Posterior vena cava (tissue), 2 donors: ENCODE measurements at regions of chr12 and their contacts with region 1.

Region 1: DNA sequence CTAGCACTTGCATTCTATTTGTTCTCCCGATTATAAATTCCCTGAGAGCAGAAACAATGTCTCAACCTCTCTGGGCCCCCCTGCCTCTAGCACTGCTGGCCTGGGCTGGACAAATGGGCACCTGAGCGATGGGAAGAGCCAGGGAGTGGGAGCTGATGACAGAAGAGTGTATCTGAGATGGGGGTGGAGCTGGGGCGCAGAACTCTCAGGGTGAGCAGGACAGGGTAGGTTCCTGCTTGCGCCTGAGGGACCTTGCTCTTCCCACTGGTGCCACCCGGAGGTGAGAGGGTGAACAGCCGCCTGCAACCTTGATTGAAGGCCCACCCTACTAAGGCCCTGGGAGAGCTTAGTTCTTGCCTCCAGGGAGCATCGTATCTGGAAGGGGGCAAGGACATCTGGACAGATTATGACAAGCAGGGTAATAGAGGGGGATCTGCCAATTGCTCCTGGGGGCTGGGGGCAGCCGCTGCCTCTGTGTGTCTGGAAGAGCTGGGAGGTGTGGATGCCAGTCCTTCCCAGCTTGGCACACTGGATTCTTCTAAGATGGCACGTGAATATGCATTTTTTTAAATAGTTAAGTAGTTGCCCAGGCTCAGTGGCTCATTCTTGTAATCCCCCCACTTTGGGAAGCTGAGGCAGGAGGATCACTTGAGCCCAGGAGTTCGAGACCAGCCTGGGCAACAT is 43.0 kb upstream of the TSPAN9 start:
- DNase-seq: no peak

Region 2: DNA sequence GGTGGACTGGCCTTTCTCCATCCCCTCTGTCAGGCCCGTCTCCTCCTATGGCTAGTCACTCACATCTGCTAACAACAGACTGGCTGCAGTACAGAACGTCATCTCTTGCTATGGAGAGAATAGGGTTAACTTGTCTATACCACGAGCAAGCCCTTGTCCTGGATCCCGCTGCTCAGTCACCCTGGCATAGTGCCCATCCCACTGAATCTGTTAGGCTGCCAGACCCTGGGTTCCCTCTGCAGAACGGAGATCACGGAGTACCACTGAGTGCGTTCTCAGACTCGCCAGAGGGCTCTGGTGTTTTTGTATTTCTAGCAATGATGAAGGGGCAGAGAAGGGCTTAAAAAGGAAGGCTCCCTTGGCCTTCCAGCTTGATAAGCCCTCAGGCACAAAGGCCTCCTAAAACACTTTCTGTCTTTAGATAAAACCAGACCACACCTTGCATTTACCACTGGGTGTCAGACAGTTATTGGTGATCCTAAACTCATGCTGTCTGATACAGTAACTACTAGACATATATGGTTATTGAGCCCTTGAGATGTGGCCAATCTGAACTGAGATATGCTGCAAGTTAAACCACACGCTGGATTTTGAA is 193.1 kb before region 1 on chr12:
- intact Hi-C with region 1: no loop called
- DNase-seq: no peak

Region 3: DNA sequence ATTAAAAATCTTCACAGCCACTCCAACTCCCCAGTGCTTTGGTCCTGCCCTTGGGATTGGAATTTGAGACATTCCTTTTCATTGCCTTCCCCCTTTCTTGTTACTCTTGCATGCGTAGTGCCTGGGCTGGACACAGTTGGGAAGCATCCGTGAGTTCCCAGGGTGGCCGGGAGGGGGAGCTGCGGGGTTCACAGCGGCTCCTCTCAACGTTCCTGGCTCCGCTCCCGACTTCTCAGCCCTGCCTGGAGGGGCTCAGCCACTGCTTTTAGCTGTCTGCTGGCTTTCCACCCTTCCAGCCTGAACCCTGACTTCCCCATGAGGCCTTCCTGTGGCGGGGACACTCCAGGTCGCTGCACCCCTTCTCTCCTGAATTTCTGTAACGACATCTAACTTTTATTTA is 180.6 kb before region 1 on chr12:
- intact Hi-C with region 1: loop called in 1 of 2 experiments (anchors 10 kb)
- DNase-seq: peak; percentile 93

Region 4: DNA sequence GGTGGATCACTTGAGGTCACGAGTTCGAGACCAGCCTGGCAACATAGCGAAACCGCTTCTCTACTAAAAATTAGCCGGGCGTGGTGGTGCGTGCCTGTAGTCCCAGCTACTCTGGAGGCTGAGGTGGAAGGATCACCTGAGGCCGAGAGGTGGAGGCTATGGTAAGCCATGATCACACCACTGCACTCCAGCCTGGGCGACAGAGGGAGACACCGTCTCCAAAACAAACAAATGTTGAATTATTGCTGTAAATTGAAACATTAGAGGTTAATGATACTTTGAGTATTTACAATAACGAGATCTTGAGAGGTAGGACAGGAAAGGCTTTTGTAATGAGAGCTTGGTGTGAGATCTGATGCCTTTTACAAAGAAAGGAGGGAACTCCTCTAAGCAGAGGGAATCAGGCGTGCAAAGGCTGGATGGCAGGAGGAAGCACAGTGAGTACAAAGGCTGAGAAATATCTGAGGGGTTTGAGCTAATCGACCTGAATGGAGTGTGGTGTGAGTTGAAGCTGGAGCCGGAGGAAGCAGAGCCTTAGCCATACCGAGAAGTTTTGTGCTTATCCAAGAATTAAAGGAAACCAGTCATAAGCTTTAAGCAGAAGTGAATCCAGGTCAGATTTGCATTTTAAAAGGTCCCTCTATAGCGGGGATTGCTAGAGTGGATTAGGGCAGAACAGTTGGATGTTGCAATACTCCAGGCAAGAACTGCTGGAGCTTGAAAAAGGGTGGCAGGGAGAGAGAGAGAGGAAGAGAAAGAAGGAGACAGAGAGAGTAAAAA is 156.1 kb before region 1 on chr12:
- intact Hi-C with region 1: loop called in 1 of 2 experiments (anchors 10 kb)
- DNase-seq: peak; percentile 35